Right cardiac atrium (tissue), 5 donors: ENCODE measurements at regions of chr1 and their contacts with region 1.

Region 1: DNA sequence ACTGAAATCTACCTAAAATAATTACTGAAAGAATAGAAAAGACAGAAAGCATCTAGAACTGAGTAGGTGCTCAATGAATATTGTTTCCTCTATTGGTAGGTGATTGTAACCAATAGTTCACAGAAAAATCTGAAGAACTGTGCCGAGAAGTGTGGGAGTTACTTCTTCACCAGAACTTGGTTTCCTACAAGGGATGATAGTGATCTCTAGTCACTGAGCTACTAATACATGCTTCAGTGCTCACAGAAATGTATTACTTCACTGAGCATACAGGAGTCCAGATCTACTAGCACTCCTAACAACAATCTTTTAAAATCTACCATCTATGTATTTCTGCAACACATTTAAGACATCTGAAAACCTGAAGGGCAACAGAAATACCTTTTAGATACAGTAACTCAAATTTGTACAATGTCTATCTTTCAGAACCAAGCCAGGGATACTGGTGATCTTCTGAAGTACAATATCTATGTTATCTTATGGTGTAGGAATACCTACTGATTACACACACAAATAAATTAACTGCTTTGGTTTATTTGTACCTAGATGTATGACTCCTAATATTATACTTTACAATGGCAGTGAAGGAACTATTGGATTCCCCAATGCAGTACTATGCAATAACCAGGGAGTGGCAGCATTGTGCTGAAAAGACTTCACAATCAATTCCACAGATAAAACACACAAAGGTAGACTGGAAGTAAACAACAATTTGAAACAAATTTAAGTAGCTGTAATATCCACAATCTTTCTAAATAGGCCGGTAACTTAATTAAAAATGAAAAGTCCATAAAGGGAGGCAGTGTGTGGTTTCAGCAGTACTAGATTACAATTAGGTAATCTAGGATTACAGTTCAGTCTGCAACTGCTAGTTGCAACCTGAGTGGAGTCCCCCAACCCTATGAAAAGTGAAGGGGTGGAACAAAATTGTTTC is 243.0 kb downstream of the SLC45A1 start:
- DNase-seq: no peak
- ATAC-seq: peak; percentile 52 to 56
- H3K4me3 ChIP-seq: no peak overlapping the region
- H3K27ac ChIP-seq: no peak overlapping the region
- H3K4me1 ChIP-seq: peaks cover 7% of the 10 kb centered on the region
- H3K27me3 ChIP-seq: no peaks in the 10 kb centered on the region

Region 2: DNA sequence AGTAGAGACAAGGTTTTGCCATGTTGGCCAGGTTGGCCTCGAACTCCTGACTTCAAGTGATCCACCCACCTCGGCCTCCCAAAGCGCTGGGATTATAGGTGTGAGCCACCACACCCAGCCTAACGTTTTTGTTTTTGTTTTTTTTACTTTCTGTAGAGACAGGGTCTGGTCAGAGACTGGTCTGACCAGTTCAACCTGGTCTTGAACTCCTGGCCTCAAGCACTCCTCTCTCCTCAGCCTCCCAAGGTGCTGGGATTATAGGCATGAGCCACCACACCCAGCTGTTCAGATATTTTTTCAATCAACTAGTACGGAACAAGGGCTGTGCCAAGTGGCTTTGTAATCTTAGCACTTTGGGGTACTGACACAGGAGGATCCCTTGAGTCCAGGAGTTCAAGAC is 47.0 kb after region 1 on chr1:
- intact Hi-C with region 1: no loop called
- DNase-seq: no peak
- ATAC-seq: no peak
- H3K4me3 ChIP-seq: no peak overlapping the region
- H3K27ac ChIP-seq: no peak overlapping the region
- H3K4me1 ChIP-seq: no peaks in the 10 kb centered on the region
- H3K27me3 ChIP-seq: no peaks in the 10 kb centered on the region

Region 3: DNA sequence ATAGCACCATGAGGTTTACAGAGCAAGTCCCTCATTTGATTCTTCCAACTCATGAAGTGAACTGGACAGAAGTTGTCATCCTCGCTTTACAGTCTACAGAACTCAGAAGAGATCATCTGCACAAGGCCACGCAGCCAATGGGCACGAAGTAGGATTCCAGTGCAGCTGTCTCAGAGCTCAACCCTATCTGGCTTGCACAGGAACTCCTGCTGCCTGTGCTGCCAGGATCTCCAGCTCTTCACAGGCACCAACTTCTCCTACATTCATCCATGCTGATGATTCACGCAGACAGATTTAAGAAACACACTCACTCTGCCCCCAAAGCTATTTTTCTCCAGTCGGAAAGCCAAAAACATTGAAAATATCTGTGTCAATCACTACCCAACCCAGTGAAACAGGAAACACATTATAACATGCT is 99.5 kb after region 1 on chr1:
- intact Hi-C with region 1: no loop called
- DNase-seq: peak; percentile 53 to 80 (median 66)
- ATAC-seq: peak; percentile 86 to 88
- H3K4me3 ChIP-seq: no peak overlapping the region
- H3K27ac ChIP-seq: peak overlapping the region; percentile 59
- H3K4me1 ChIP-seq: peaks cover 21% of the 10 kb centered on the region
- H3K27me3 ChIP-seq: no peaks in the 10 kb centered on the region

Region 4: GRCh38 chr1:8671306-8671917 is 110.5 kb after region 1 on chr1:
- intact Hi-C with region 1: loop called (anchors 2 to 10 kb)
- DNase-seq: no peak
- ATAC-seq: peak; percentile 70 to 73
- H3K4me3 ChIP-seq: peak overlapping the region; percentile 34
- H3K27ac ChIP-seq: no peak overlapping the region
- H3K4me1 ChIP-seq: no peaks in the 10 kb centered on the region
- H3K27me3 ChIP-seq: no peaks in the 10 kb centered on the region

Region 5: DNA sequence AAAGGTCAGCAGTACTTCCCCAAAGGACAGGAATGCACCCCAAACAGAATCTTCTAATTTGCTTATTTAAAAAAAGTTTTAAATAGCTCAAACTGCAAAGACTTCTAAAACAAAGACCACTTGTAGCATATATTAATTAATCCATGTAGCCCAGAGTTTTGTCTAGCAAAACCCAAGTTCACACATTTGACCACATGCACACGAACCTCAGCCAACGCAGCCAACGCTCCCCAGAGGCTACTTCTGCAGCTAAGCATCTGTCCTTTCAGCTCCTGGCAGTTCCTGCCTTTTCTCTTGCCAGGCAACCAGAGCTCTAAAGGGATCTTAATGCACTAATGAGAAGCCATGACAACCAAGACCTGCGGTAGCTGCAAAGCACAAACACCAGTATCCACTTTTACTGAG is 166.9 kb after region 1 on chr1:
- intact Hi-C with region 1: loop called (anchors 5 to 10 kb)
- DNase-seq: peak; percentile 50 to 86 (median 79)
- ATAC-seq: peak; percentile 50 to 76
- H3K4me3 ChIP-seq: no peak overlapping the region
- H3K27ac ChIP-seq: no peak overlapping the region
- H3K4me1 ChIP-seq: no peaks in the 10 kb centered on the region
- H3K27me3 ChIP-seq: no peaks in the 10 kb centered on the region

Region 6: GRCh38 chr1:8733466-8733865 is 172.6 kb after region 1 on chr1:
- intact Hi-C with region 1: loop called (anchors 5 to 10 kb)
- DNase-seq: no peak
- ATAC-seq: no peak
- H3K4me3 ChIP-seq: no peak overlapping the region
- H3K27ac ChIP-seq: no peak overlapping the region
- H3K4me1 ChIP-seq: peaks cover 1% of the 10 kb centered on the region
- H3K27me3 ChIP-seq: no peaks in the 10 kb centered on the region

Region 7: DNA sequence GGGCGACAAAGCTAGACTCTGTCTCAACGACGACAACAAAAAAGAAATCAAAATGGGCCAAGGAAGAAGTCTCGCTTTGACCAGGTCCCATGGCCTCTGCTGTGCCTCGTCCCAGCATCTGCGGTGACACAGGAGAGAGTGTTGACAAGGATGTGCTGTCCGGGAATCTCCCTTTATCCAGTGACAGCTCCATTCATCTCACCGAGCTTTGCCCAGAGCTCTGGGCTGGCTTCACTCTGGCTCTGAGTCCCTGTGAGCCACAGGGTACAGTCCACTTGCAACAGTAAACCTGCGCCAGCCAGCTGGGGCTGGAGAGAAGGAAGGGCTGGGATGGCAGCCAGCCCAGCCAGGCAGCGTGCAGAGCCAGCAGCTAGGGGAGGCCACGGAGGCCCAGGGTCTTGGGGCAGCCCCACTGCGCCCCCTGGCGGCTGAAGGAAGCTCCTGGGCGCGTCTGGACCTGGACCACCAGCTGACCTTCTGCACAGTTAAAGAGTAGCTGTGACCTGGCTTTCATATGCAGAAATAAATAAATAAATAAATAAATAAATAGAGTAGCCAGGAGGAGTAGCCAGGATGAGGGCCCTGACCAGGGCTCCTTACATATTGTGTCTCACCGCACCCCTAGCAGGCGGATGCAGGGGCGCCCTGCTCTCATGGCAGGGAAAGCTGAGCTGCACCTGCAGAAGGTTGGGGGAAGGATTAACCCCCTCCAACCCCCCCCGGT is 287.9 kb after region 1 on chr1:
- intact Hi-C with region 1: loop called in 3 of 4 experiments (anchors 10 kb)
- DNase-seq: peak; percentile 93 to 97 (median 97)
- ATAC-seq: peak; percentile 97
- H3K4me3 ChIP-seq: no peak overlapping the region
- H3K27ac ChIP-seq: peak overlapping the region; percentile 8
- H3K4me1 ChIP-seq: peaks cover 11% of the 10 kb centered on the region
- H3K27me3 ChIP-seq: no peaks in the 10 kb centered on the region